Activated T-helper 1 cell treated with anti-CD3 and anti-CD28 coated beads, Interleukin-12 subunit alpha, Interleukin-12 subunit beta, Interleukin-2, Interleukin-4 antibody, amounts not matched to agents 30 ng/mL and 10 ng/mL and 1 ng/mL, durations not matched to agents 14 hours and 24 hours and 36 hours (primary cell): ENCODE measurements at regions of chr19 and their contacts with region 1.

Region 1: GRCh38 chr19:49570138-49570856 is 10.1 kb downstream of the NOSIP start:
- DNase-seq: peak; percentile 69
- H3K4me3 Mint-ChIP-seq: peak overlapping the region; percentile 66
- H3K27ac Mint-ChIP-seq: peak overlapping the region; percentile 80
- H3K4me1 Mint-ChIP-seq: peaks cover 46% of the 10 kb centered on the region
- H3K27me3 Mint-ChIP-seq: no peaks in the 10 kb centered on the region

Region 2: GRCh38 chr19:49331616-49332055 is 238.7 kb before region 1 on chr19:
- intact Hi-C with region 1: no loop called
- DNase-seq: peak; percentile 56
- H3K4me3 Mint-ChIP-seq: no peak overlapping the region
- H3K27ac Mint-ChIP-seq: peak overlapping the region; percentile 14
- H3K4me1 Mint-ChIP-seq: peaks cover 79% of the 10 kb centered on the region
- H3K27me3 Mint-ChIP-seq: no peaks in the 10 kb centered on the region

Region 3: DNA sequence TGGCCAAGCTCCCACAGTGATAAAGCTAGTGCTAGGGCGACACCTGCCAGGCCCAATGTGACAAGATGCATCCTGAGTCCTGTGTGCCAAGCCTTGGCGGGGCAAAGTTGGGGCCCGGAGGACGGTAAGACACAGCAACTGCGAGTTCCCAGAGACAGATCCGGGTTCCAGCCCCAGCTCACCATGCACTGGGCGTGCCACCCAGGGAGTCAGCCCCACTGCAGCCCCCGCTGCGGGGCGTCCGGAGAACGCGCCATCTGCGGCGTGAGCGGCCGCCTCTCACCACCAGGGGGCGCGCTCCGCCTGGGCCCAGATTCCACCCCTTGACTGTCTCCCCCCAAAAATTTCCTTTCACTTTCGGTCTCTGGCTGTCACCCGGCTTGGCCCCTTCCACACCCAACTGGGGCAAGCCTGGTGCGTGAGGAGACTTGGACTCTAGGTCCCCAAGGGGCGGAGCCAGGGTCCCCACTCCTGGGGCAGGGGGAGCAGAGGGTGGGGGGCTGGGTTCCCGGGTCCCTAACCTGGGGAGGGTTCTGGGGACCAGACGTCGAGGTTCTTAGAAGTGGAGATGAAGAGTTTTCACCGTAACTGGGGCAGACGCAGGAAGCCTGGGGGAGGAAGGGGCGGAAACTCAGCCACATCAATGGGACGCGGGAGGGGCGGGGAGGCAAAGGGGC is 96.3 kb before region 1 on chr19 and contains the start of gene FLT3LG:
- intact Hi-C with region 1: loop called (anchors 1 kb)
- DNase-seq: peak; percentile 94
- H3K4me3 Mint-ChIP-seq: peak within 1 kb of the TSS; percentile 91
- H3K27ac Mint-ChIP-seq: peak within 1 kb of the TSS; percentile 97
- H3K4me1 Mint-ChIP-seq: peaks cover 45% of the 10 kb centered on the region
- H3K27me3 Mint-ChIP-seq: no peaks in the 10 kb centered on the region
- total RNA-seq, gene FLT3LG: 58.4 and 65.4 TPM in 2 replicates

Region 4: DNA sequence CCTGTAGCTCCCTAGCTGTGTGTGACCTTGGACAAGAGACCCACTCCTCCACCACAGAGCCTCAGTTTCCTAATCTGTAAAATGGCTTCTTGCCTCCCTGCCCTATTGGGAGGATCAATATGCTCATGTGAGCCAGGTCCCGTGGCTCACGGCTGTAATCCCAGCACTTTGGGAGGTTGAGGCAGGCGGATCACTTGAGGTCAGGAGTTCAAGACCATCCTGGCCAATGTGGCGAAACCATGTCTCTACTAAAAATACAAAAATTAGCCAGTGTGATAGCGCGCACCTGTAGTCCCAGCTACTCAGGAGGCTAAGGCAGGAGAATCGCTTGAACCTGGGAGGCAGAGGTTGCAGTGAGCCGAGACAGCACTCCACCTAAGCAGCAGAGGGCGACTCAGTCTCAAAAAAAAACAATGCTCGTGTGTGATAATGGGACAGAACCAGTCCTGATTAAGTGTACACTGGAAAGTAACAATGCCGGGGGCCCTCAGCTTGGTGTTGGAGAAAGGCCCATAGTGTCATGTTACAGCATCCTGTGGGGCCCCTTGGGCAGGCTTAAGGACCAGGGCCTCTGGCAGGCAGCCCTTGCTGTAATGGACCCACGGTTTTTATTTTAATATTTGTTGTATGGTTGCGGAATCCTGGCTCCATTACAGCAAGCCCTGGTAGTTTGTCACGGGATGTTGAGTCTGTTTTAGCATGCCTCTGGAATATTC is 67.3 kb before region 1 on chr19:
- intact Hi-C with region 1: loop called (anchors 1 kb)
- DNase-seq: peak; percentile 56
- H3K4me3 Mint-ChIP-seq: no peak overlapping the region
- H3K27ac Mint-ChIP-seq: no peak overlapping the region
- H3K4me1 Mint-ChIP-seq: peaks cover 54% of the 10 kb centered on the region
- H3K27me3 Mint-ChIP-seq: no peaks in the 10 kb centered on the region

Region 5: GRCh38 chr19:49528211-49528771 is 42.0 kb before region 1 on chr19:
- intact Hi-C with region 1: loop called (anchors 1 kb)
- DNase-seq: no peak
- H3K4me3 Mint-ChIP-seq: peak overlapping the region; percentile 81
- H3K27ac Mint-ChIP-seq: peak overlapping the region; percentile 61
- H3K4me1 Mint-ChIP-seq: peaks cover 23% of the 10 kb centered on the region
- H3K27me3 Mint-ChIP-seq: peaks cover 13% of the 10 kb centered on the region

Region 6: GRCh38 chr19:49546825-49547565 is 23.3 kb before region 1 on chr19:
- intact Hi-C with region 1: loop called (anchors 1 kb)
- DNase-seq: peak; percentile 68
- H3K4me3 Mint-ChIP-seq: peak overlapping the region; percentile 35
- H3K27ac Mint-ChIP-seq: peak overlapping the region; percentile 36
- H3K4me1 Mint-ChIP-seq: peaks cover 37% of the 10 kb centered on the region
- H3K27me3 Mint-ChIP-seq: no peaks in the 10 kb centered on the region

Region 7: GRCh38 chr19:49555600-49556411 is 14.5 kb before region 1 on chr19:
- intact Hi-C with region 1: loop called (anchors 1 kb)
- DNase-seq: peak; percentile 73
- H3K4me3 Mint-ChIP-seq: peak overlapping the region; percentile 15
- H3K27ac Mint-ChIP-seq: peak overlapping the region; percentile 89
- H3K4me1 Mint-ChIP-seq: peaks cover 65% of the 10 kb centered on the region
- H3K27me3 Mint-ChIP-seq: no peaks in the 10 kb centered on the region

Region 8: DNA sequence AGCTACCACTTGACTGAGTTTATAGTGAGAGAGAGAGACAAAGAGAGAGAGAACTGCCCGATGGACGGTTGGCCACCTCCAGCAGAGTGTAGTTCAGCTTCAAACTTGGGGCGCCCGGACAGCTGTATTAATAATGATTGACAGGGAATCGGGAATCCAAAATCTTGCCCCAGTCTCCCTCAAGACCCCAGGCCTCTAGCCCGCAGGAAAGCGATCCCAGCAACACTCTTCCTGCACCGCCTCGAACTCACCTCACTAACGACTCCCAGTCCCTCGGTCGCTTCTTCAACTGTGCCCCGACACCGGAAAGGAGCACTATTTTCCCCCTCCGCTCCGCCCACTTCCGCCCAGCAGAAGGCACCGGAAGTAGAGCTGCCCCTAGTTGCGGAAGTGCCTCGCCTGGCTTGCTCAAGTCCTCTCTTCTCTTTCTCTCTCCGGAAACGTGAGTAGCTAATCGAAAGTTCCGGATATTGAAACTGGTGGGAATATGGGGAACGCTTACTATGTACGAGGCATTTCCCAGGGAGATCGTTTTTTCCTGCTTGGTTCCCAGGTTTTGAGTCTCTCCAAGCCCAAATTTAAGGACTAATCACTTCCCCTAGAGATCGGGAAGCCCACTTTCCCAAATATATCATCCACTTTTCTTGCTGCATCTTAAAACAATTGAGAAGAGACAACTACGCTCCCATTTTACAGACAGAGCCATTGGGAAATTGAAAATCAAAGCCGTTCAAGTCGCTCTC is 10.1 kb after region 1 on chr19 and contains the start of gene NOSIP:
- intact Hi-C with region 1: loop called (anchors 1 kb)
- DNase-seq: peak; percentile 94
- H3K4me3 Mint-ChIP-seq: peak within 1 kb of the TSS; percentile 93
- H3K27ac Mint-ChIP-seq: peak within 1 kb of the TSS; percentile 86
- H3K4me1 Mint-ChIP-seq: peaks cover 30% of the 10 kb centered on the region
- H3K27me3 Mint-ChIP-seq: no peaks in the 10 kb centered on the region
- total RNA-seq, gene NOSIP: 72.1 and 77.5 TPM in 2 replicates